ENCODE measurements at regions of chr9 and their contacts with region 1.

Region 1: GRCh38 chr9:109320742-109321448 is at the start of gene EPB41L4B:
- DNase-seq: peak; percentile 88 to 95 (median 94)
- H3K4me3 ChIP-seq: peak within 1 kb of the TSS; percentile 38
- H3K27ac ChIP-seq: peak within 1 kb of the TSS; percentile 22 to 74
- H3K4me1 ChIP-seq: peaks cover 5% of the 10 kb centered on the region
- H3K27me3 ChIP-seq: no peaks in the 10 kb centered on the region
- CTCF ChIP-seq: peak; percentile 89 to 99 (median 95)
- EP300 ChIP-seq: no peak
- POLR2A ChIP-seq: peak; percentile 17
- total RNA-seq, gene EPB41L4B: 12.5 to 34.3 (median 15.1) TPM

Region 2: DNA sequence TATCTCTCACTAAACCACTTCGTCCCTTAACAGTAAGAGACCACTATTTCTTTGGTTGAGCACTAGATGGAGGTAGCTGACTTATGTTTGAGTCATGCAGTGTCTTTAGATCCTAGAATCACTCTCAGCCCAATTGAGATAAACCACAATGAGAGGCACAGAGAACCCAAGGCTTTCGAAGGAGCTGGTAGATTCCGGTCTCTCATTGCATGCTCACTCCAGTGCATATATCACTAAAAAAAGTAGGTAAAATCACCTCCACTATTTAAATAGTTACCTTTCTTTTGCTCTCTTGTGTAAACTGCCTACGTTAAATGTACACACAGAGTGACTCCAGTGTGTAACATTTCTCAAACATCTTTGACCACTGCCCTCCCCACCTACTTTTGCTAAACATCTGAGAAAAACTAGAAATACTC is 431.2 kb before region 1 on chr9:
- intact Hi-C with region 1: loop called in 2 of 4 experiments (anchors 10 kb)
- DNase-seq: no peak
- H3K4me3 ChIP-seq: no peak overlapping the region
- H3K27ac ChIP-seq: peak overlapping the region in 1 of 2 donors; percentile 18
- H3K4me1 ChIP-seq: peaks cover 2% of the 10 kb centered on the region
- H3K27me3 ChIP-seq: no peaks in the 10 kb centered on the region
- CTCF ChIP-seq: peak in 2 of 3 donors; percentile 9 to 44
- EP300 ChIP-seq: no peak
- POLR2A ChIP-seq: no peak

Region 3: GRCh38 chr9:109186857-109187256 is 134.0 kb before region 1 on chr9:
- intact Hi-C with region 1: loop called in 3 of 4 experiments (anchors 2 to 5 kb)
- DNase-seq: no peak
- H3K4me3 ChIP-seq: no peak overlapping the region
- H3K27ac ChIP-seq: no peak overlapping the region
- H3K4me1 ChIP-seq: no peaks in the 10 kb centered on the region
- H3K27me3 ChIP-seq: no peaks in the 10 kb centered on the region
- CTCF ChIP-seq: no peak
- EP300 ChIP-seq: no peak
- POLR2A ChIP-seq: no peak

Region 4: DNA sequence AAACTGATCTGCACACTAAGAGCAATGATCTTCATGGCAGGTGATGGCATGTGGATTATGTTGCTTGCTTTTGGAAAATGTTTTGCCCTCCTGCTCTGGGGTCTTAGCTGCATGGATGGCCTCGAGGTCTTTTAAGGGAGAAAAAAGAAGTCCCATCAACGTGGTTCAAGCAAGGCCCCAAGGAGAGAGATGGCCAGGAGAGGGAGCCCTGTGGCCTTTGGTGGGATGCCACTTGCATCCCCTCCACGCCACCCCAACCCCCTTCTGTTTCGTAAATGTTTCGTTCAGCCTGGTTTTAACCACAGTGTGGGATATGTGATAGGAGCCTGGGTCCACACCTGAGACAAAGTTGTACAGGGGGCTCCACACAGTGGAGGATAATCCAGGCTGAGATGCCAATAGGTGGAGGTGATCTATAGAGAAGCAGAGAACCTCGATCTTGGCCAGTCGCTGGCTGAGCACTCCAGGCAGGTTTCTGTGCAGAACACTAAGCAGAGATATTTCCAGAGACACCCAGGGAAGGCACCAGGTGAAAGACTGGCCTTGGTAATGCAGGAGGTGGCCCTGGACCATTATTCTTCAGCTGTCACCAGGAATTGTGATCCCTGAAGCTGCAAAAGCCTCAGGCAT is 128.0 kb before region 1 on chr9:
- intact Hi-C with region 1: loop called in 3 of 4 experiments (anchors 2 to 5 kb)
- DNase-seq: peak; percentile 57 to 78 (median 71)
- H3K4me3 ChIP-seq: no peak overlapping the region
- H3K27ac ChIP-seq: no peak overlapping the region
- H3K4me1 ChIP-seq: no peaks in the 10 kb centered on the region
- H3K27me3 ChIP-seq: no peaks in the 10 kb centered on the region
- CTCF ChIP-seq: peak; percentile 31 to 41 (median 34)
- EP300 ChIP-seq: no peak
- POLR2A ChIP-seq: no peak

Region 5: DNA sequence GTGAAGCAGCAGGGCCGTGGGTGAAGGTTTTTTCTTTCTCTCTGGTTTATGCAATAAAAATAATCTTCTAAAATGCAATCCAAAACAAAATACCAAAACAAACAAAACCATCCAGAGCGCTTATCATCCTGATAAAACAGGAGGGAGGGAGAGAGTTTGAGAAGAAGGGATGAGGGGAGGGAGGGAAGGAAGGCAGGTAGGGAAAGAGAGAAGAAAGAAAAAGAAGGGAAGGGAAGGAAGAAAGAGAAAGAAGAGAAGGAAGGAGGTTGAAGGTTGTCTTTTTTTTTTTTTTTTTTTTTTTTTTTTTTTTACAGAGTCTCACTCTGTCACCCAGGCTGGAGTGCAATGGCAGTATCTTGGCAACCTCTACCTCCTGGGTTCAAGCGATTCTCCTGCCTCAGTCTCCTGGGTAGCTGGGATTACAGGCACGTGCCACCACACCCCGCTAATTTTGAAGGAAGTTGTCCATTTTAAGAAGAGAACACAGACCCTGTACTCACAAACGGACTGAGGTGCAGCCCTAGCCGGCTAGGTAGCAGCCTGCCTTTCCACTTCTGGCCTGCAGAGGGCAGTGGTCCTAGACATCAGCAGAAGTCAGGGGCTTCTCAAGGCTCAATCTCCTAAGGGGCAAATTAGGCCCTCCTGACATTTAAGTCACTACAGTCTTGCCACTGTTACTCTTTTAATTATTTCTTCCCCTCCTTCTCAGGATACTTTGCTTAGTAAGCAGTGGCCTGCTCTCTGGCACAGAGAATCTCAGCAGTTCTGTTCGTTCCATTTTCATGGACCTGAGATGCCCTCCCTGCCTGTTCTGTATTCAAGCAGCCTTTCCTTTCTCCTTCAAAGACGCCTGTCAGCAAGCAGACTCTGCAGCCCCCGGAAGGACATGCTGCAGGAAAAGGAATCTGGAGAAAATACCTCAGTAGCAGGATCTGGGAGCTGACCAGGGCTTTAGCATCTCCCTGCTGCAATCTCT is 76.5 kb before region 1 on chr9:
- intact Hi-C with region 1: loop called in 2 of 4 experiments (anchors 5 to 10 kb)
- DNase-seq: peak; percentile 74 to 86 (median 83)
- H3K4me3 ChIP-seq: no peak overlapping the region
- H3K27ac ChIP-seq: peak overlapping the region in 1 of 2 donors; percentile 73
- H3K4me1 ChIP-seq: peaks cover 7% of the 10 kb centered on the region
- H3K27me3 ChIP-seq: no peaks in the 10 kb centered on the region
- CTCF ChIP-seq: peak; percentile 73 to 78 (median 77)
- EP300 ChIP-seq: no peak
- POLR2A ChIP-seq: no peak

Region 6: GRCh38 chr9:109251080-109251775 is 69.7 kb before region 1 on chr9:
- intact Hi-C with region 1: loop called in 3 of 4 experiments (anchors 5 to 10 kb)
- DNase-seq: peak; percentile 43 to 77 (median 64)
- H3K4me3 ChIP-seq: no peak overlapping the region
- H3K27ac ChIP-seq: peak overlapping the region; percentile 70 to 88
- H3K4me1 ChIP-seq: peaks cover 23% of the 10 kb centered on the region
- H3K27me3 ChIP-seq: no peaks in the 10 kb centered on the region
- CTCF ChIP-seq: no peak
- EP300 ChIP-seq: no peak
- POLR2A ChIP-seq: no peak

Measured in ovary (tissue), 10 donors.